Upper lobe of right lung (tissue), 1 donor: ENCODE measurements at regions of chr12 and their contacts with region 1.

Region 1: GRCh38 chr12:111451649-111452129 is 46.0 kb downstream of the SH2B3 start:
- DNase-seq: no peak
- ATAC-seq: peak; percentile 52
- H3K4me3 ChIP-seq: no peak overlapping the region
- H3K27ac ChIP-seq: no peak overlapping the region
- H3K4me1 ChIP-seq: peaks cover 26% of the 10 kb centered on the region
- H3K27me3 ChIP-seq: no peaks in the 10 kb centered on the region
- CTCF ChIP-seq: peak; percentile 80

Region 2: DNA sequence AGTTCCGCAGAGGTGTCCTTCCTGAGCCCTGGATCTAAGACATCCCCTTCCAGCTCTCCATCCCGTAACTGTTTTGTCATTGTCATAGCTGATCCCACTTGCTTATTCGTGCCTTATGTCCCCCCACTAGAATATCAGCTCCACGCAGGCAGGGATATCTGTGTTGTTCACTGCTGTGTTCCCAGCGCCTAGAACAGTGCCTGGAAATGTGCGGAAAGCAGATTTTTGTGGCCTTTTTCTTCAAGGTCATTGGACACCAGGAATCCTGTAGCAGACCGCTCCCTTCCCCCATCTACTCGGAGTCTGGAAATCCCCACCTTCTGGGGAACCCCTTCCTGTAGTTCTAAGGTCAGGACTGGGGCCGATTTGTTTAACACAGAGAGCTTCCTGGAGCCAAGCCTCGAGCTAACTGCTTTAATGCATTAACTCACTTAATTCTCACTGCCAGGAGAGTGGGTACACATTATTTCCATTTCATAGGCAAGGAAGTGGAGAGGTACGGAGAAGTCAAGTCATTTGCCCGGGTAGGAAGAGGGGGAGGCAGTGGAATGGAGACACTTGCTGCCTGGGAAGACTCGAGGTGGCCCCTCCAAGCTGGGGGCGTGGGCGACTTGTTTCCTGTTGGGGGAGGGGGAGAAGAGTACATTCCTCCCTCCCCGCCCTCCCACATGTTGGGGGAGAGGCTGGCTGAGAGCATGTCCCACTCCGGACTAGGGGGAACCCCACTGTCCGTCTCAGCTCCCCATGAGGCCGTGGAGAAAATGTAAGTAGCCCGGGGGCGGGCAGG is 47.1 kb before region 1 on chr12:
- intact Hi-C with region 1: loop called (anchors 5 kb)
- DNase-seq: no peak
- ATAC-seq: no peak
- H3K4me3 ChIP-seq: peak overlapping the region; percentile 88
- H3K27ac ChIP-seq: peak overlapping the region; percentile 84
- H3K4me1 ChIP-seq: peaks cover 49% of the 10 kb centered on the region
- H3K27me3 ChIP-seq: no peaks in the 10 kb centered on the region
- CTCF ChIP-seq: no peak